Caco-2 (cell line): ENCODE measurements at regions of chr13 and their contacts with region 1.

Region 1: DNA sequence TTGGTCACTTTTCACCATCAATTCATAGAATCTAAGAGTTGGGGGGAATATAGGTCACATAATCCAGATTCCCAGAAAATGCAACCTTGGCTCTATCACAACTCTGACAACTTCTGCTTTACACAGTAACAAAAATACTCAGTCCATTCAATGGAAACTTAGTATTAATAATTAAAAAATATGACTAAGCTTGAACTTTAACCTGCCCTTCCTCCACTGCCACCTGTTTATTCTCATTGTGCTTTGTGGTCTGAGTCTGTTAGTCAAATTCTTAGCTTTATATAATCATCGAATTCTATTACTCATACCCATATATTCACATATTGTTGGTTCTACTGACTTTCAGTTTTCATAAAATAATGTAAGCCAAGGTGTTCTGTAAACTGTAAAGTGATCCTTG is 373.4 kb downstream of the LMO7 start:
- DNase-seq: peak in 1 of 2 experiments; percentile 48
- H3K4me3 ChIP-seq: no peak overlapping the region
- H3K4me3 Mint-ChIP-seq: peak overlapping the region; percentile 61
- H3K27ac Mint-ChIP-seq: peak overlapping the region; percentile 95
- H3K4me1 ChIP-seq: peaks cover 95% of the 10 kb centered on the region
- H3K4me1 Mint-ChIP-seq: peaks cover 53% of the 10 kb centered on the region
- H3K27me3 ChIP-seq: no peaks in the 10 kb centered on the region
- H3K27me3 Mint-ChIP-seq: no peaks in the 10 kb centered on the region
- CTCF ChIP-seq: no peak

Region 2: DNA sequence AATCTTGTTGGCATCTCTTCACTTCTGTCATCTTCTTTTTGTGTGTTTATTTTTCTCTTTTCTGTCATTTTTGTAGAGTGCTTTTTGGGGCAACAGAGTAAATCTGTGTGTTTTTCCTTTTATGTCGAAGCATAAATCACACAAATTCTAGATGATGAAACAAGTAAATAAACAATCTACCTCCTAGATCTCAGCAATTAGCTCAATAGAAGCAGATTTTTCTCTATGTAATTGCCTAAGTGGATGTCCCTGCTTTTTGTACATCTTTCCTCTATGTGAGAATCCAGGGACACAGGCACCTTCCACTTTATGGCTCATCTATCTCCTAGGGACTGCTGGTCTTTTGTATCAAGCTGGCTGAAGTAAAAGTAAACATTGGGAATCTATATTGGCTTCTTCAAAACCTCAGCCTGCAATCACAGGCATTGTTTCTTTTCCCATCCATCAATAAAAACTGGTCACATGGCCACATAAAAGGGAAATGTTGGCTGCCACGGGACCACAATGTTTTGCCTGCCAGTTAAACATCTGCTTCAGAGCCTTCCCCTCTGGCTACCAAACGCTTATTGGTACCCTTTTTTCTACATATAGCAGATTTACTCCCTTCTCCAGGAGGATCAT is 49.5 kb before region 1 on chr13:
- CTCF ChIA-PET with region 1: no interaction called
- POLR2A ChIA-PET with region 1: no interaction called
- intact Hi-C with region 1: no loop called
- DNase-seq: peak in 1 of 2 experiments; percentile 2
- H3K4me3 ChIP-seq: no peak overlapping the region
- H3K4me3 Mint-ChIP-seq: no peak overlapping the region
- H3K27ac Mint-ChIP-seq: no peak overlapping the region
- H3K4me1 ChIP-seq: peaks cover 5% of the 10 kb centered on the region; the same call in 1 of the 2 replicates
- H3K4me1 Mint-ChIP-seq: peaks cover 9% of the 10 kb centered on the region
- H3K27me3 ChIP-seq: no peaks in the 10 kb centered on the region
- H3K27me3 Mint-ChIP-seq: no peaks in the 10 kb centered on the region
- CTCF ChIP-seq: no peak

Region 3: GRCh38 chr13:76048675-76049375 is 39.3 kb after region 1 on chr13:
- CTCF ChIA-PET with region 1: interaction called, 3 read pairs
- POLR2A ChIA-PET with region 1: no interaction called
- intact Hi-C with region 1: loop called (anchors 1 kb)
- DNase-seq: peak in 1 of 2 experiments; percentile 29
- H3K4me3 ChIP-seq: no peak overlapping the region
- H3K4me3 Mint-ChIP-seq: peak overlapping the region; percentile 28
- H3K27ac Mint-ChIP-seq: peak overlapping the region; percentile 58
- H3K4me1 ChIP-seq: peaks cover 31% of the 10 kb centered on the region
- H3K4me1 Mint-ChIP-seq: peaks cover 19% of the 10 kb centered on the region
- H3K27me3 ChIP-seq: no peaks in the 10 kb centered on the region
- H3K27me3 Mint-ChIP-seq: no peaks in the 10 kb centered on the region
- CTCF ChIP-seq: no peak